ENCODE measurements at regions of chr6 and their contacts with region 1.

Region 1: GRCh38 chr6:125956506-125957390 is at the start of gene HINT3:
- DNase-seq: peak; percentile 96
- H3K4me3 Mint-ChIP-seq: peak within 1 kb of the TSS; percentile 52
- H3K27ac Mint-ChIP-seq: peak within 1 kb of the TSS; percentile 68
- H3K4me1 Mint-ChIP-seq: peaks cover 6% of the 10 kb centered on the region
- H3K27me3 Mint-ChIP-seq: peaks cover 1% of the 10 kb centered on the region
- total RNA-seq, gene HINT3: 7.1 and 7.9 TPM in 2 replicates

Region 2: DNA sequence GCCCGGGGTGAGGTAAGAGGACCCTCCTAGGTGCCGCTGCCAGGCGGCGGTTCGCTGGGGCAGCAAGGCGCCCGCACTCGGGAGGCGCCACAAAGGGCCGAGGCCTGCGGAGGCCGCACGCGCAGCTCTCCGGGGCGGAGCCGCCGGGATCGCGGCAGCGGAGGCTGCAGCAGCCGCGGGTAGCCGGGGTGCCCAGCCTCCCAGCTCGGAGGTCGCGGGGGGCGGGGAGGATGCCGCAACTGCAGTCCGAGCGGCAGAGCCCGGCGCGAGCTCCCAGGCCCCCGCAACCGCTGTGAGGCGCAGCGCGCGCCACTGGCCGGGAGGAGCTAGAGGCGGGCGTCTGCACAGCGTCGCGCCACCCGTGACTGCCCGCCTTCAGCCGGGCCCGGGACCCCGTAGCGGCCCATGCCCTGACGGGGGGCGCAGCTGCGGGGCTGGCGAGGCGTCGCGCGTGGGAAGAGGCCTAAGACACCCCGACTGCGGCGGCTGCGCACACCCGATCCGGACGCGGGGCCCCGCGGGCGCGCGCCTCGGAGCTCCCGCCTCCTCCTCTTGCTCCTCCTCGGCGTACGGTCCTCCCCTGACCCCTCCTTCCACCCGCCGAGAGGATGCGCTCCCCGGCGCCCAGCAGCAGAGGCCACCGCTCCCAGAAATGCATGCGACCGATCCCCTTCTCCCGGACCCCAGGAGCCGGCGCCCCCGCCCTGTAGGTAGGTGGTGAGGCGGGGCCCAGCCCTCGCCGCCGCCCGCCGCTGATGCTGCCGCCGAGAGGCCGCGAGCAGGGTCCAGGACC is 166.2 kb before region 1 on chr6 and contains the start of gene NCOA7:
- intact Hi-C with region 1: loop called (anchors 1 kb)
- DNase-seq: peak; percentile 76
- H3K4me3 Mint-ChIP-seq: peak within 1 kb of the TSS; percentile 92
- H3K27ac Mint-ChIP-seq: peak within 1 kb of the TSS; percentile 99
- H3K4me1 Mint-ChIP-seq: peaks cover 50% of the 10 kb centered on the region
- H3K27me3 Mint-ChIP-seq: no peaks in the 10 kb centered on the region
- total RNA-seq, gene NCOA7: 40.5 and 43.4 TPM in 2 replicates

Region 3: DNA sequence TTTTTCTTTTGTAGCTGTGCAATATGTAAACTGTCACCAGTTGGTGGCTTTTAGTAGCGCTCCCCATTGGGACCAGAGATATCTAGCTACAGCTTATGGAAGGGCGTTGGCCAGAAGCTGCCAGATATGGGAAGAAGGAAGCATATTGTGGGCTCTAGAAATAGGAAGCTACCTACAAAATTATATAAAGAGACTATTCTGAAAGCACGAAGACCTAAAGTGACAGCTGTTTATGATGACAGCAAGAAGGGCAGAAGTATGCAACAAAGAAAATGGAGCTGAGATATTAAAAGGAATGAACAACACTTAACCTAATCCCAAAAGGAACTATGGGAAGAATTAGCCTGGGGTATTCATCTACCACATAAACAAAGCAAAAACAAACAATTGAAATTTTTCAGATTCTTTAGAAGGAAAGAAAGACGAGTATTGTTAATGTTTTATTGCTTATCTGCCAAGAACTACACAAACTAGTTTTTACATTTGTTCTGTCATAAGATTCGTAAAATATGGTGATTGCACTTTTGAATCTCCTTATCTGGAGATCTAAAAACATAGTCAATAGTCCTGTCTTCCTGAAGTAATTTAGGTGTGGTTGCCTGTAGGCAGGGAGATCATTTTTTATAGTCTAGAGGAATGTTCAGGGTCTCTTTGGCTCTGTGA is 84.4 kb before region 1 on chr6:
- intact Hi-C with region 1: no loop called
- DNase-seq: no peak
- H3K4me3 Mint-ChIP-seq: no peak overlapping the region
- H3K27ac Mint-ChIP-seq: no peak overlapping the region
- H3K4me1 Mint-ChIP-seq: peaks cover 3% of the 10 kb centered on the region
- H3K27me3 Mint-ChIP-seq: no peaks in the 10 kb centered on the region

Region 4: DNA sequence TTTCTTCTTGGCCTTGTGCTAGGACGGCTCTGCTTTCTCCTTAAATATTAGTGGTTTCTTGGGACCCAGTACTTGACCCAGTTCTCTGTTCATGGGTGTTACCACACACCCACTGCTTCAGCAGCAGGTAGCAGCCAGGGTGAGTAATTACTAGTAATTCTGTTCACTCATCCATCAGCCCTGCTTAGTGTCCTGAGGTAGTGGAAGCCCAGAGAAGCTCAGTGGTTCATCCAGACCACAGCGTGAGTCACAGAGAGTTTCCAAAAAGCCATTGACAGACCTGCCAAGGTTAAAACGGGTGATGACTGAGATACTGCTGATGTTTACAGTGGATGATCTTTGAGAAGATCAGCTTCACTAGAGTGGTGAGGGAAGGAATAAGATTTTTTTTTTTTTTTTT is 51.9 kb before region 1 on chr6:
- intact Hi-C with region 1: loop called (anchors 1 kb)
- DNase-seq: peak; percentile 22
- H3K4me3 Mint-ChIP-seq: no peak overlapping the region
- H3K27ac Mint-ChIP-seq: peak overlapping the region; percentile 73
- H3K4me1 Mint-ChIP-seq: peaks cover 38% of the 10 kb centered on the region
- H3K27me3 Mint-ChIP-seq: no peaks in the 10 kb centered on the region

Region 5: GRCh38 chr6:125974214-125974866 is 17.6 kb after region 1 on chr6:
- intact Hi-C with region 1: loop called (anchors 1 kb)
- DNase-seq: no peak
- H3K4me3 Mint-ChIP-seq: no peak overlapping the region
- H3K27ac Mint-ChIP-seq: no peak overlapping the region
- H3K4me1 Mint-ChIP-seq: peaks cover 6% of the 10 kb centered on the region
- H3K27me3 Mint-ChIP-seq: no peaks in the 10 kb centered on the region